Activated CD4-positive, alpha-beta T cell treated with anti-CD3 and anti-CD28 coated beads, Interleukin-2, amount 10 ng/mL, durations not matched to agents 24 days and 14 days (primary cell): ENCODE measurements at regions of chr16 and their contacts with region 1.

Region 1: GRCh38 chr16:69424053-69424934 is at the start of gene CYB5B:
- DNase-seq: peak; percentile 98
- H3K4me3 Mint-ChIP-seq: peak within 1 kb of the TSS; percentile 100
- H3K27ac Mint-ChIP-seq: peak within 1 kb of the TSS; percentile 97
- H3K4me1 Mint-ChIP-seq: peaks cover 33% of the 10 kb centered on the region
- H3K27me3 Mint-ChIP-seq: no peaks in the 10 kb centered on the region
- total RNA-seq, gene CYB5B: 154 and 166 TPM in 2 replicates

Region 2: GRCh38 chr16:69339289-69340108 is 84.8 kb before region 1 on chr16 and contains the starts of genes COG8 and NIP7:
- intact Hi-C with region 1: loop called (anchors 1 kb)
- DNase-seq: peak; percentile 98
- H3K4me3 Mint-ChIP-seq: peak within 1 kb of the TSS; percentile 98
- H3K27ac Mint-ChIP-seq: peak within 1 kb of the TSS; percentile 99
- H3K4me1 Mint-ChIP-seq: peaks cover 40% of the 10 kb centered on the region
- H3K27me3 Mint-ChIP-seq: no peaks in the 10 kb centered on the region
- total RNA-seq, gene COG8: 44.1 and 44.6 TPM in 2 replicates
- total RNA-seq, gene NIP7: 81.2 and 84.8 TPM in 2 replicates

Region 3: GRCh38 chr16:69386596-69386995 is 37.7 kb before region 1 on chr16:
- intact Hi-C with region 1: loop called (anchors 1 kb)
- DNase-seq: no peak
- H3K4me3 Mint-ChIP-seq: no peak overlapping the region
- H3K27ac Mint-ChIP-seq: peak overlapping the region; percentile 87
- H3K4me1 Mint-ChIP-seq: peaks cover 21% of the 10 kb centered on the region
- H3K27me3 Mint-ChIP-seq: no peaks in the 10 kb centered on the region

Region 4: GRCh38 chr16:69443927-69444631 is 19.8 kb after region 1 on chr16:
- intact Hi-C with region 1: loop called (anchors 2 kb)
- DNase-seq: peak; percentile 70
- H3K4me3 Mint-ChIP-seq: peak overlapping the region; percentile 79
- H3K27ac Mint-ChIP-seq: peak overlapping the region; percentile 87
- H3K4me1 Mint-ChIP-seq: peaks cover 28% of the 10 kb centered on the region
- H3K27me3 Mint-ChIP-seq: no peaks in the 10 kb centered on the region

Region 5: GRCh38 chr16:69465083-69465721 is 40.9 kb after region 1 on chr16:
- intact Hi-C with region 1: loop called (anchors 10 kb)
- DNase-seq: peak; percentile 78
- H3K4me3 Mint-ChIP-seq: peak overlapping the region; percentile 58
- H3K27ac Mint-ChIP-seq: peak overlapping the region; percentile 81
- H3K4me1 Mint-ChIP-seq: peaks cover 47% of the 10 kb centered on the region
- H3K27me3 Mint-ChIP-seq: no peaks in the 10 kb centered on the region

Region 6: GRCh38 chr16:69754469-69755310 is 330.4 kb after region 1 on chr16 and contains the start of gene NOB1:
- intact Hi-C with region 1: loop called (anchors 1 kb)
- DNase-seq: peak; percentile 99
- H3K4me3 Mint-ChIP-seq: peak within 1 kb of the TSS; percentile 100
- H3K27ac Mint-ChIP-seq: peak within 1 kb of the TSS; percentile 100
- H3K4me1 Mint-ChIP-seq: peaks cover 27% of the 10 kb centered on the region
- H3K27me3 Mint-ChIP-seq: no peaks in the 10 kb centered on the region
- total RNA-seq, gene NOB1: 127 and 129 TPM in 2 replicates